K562 (cell line): ENCODE measurements at regions of chr20 and their contacts with region 1.

Region 1: DNA sequence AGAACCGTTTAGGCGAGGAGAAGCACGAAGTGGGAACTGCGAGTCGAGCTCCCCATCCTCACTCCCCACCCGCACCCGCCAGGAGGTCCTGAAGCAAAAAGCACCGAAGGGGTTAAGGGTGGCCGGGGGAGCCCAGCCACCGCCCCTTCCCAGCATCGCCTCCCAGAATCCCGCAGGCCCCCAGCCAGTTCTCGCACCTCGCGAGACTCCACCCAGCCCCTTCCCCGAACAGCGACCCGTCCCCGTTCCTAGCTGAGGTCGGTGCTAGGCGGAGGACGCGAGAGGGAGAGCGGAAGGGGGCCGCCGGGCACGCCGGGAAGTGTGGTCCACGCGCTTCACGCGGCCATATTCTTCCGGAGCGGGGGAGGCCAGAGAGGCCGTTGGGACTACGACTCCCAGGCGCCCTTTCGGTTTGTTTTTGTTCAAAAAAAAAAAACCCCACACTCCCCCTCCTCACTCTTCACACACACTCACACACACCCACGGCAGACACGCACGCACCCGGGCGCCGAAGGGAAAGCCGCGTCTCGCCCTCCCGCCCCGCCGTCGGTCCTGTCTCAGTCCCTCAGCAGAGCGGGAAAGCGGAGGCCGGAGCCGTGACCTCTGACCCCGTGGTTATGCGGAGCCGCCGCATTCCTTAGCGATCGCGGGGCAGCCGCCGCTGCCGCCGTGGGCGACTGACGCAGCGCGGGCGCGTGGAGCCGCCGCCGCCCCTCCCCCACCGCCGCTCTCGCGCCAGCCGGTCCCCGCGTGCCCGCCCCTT is at the start of gene ASXL1:
- DNase-seq: peak; percentile 92 to 98 (median 93)
- ATAC-seq: peak; percentile 94
- H3K4me3 ChIP-seq: peak within 1 kb of the TSS; percentile 96
- H3K27ac ChIP-seq: peak within 1 kb of the TSS; percentile 99
- H3K4me1 ChIP-seq: peaks cover 17 to 33% of the 10 kb centered on the region in 2 experiments
- H3K27me3 ChIP-seq: no peaks in the 10 kb centered on the region
- CTCF ChIP-seq: peak in 1 of 3 experiments; percentile 46; a peak in 2 of 6 replicates
- EP300 ChIP-seq: no peak
- POLR2A ChIP-seq: peak; percentile 82
- RAD21 ChIP-seq: no peak
- polyA plus RNA-seq, gene ASXL1: 6.5 to 8.4 TPM

Region 2: GRCh38 chr20:32207626-32208498 is 150.2 kb before region 1 on chr20 and contains the starts of genes PLAGL2 and POFUT1:
- CTCF ChIA-PET with region 1: no interaction called
- POLR2A ChIA-PET with region 1: no interaction called
- in situ Hi-C with region 1: no loop called
- intact Hi-C with region 1: loop called (anchors 10 kb)
- DNase-seq: peak; percentile 92 to 98 (median 98)
- ATAC-seq: peak; percentile 94
- H3K4me3 ChIP-seq: peak within 1 kb of the TSS; percentile 99
- H3K27ac ChIP-seq: peak within 1 kb of the TSS; percentile 91
- H3K4me1 ChIP-seq: peaks cover 18 to 39% of the 10 kb centered on the region in 2 experiments
- H3K27me3 ChIP-seq: no peaks in the 10 kb centered on the region
- CTCF ChIP-seq: peak; percentile 24 to 27 (median 26); a peak in 4 of 6 replicates
- EP300 ChIP-seq: no peak
- POLR2A ChIP-seq: peak; percentile 91
- RAD21 ChIP-seq: peak; percentile 23 to 29; a peak in 3 of 4 replicates
- polyA plus RNA-seq, gene PLAGL2: 3.1 to 5.3 TPM
- polyA plus RNA-seq, gene POFUT1: 3.5 to 6.0 TPM

Region 3: GRCh38 chr20:32344835-32345506 is 13.1 kb before region 1 on chr20:
- CTCF ChIA-PET with region 1: no interaction called
- POLR2A ChIA-PET with region 1: interaction called, 10 read pairs
- in situ Hi-C with region 1: no loop called
- intact Hi-C with region 1: no loop called
- DNase-seq: no peak
- ATAC-seq: peak; percentile 77
- H3K4me3 ChIP-seq: no peak overlapping the region
- H3K27ac ChIP-seq: no peak overlapping the region
- H3K4me1 ChIP-seq: peaks cover 2 to 3% of the 10 kb centered on the region in 2 experiments; a peak in 1 of 5 replicates
- H3K27me3 ChIP-seq: no peaks in the 10 kb centered on the region
- CTCF ChIP-seq: no peak
- EP300 ChIP-seq: no peak
- POLR2A ChIP-seq: no peak
- RAD21 ChIP-seq: no peak

Region 4: GRCh38 chr20:32368925-32369324 is 10.9 kb after region 1 on chr20:
- CTCF ChIA-PET with region 1: interaction called, 3 read pairs
- POLR2A ChIA-PET with region 1: interaction called, 16 read pairs
- in situ Hi-C with region 1: no loop called
- intact Hi-C with region 1: no loop called
- DNase-seq: no peak
- ATAC-seq: no peak
- H3K4me3 ChIP-seq: no peak overlapping the region
- H3K27ac ChIP-seq: no peak overlapping the region
- H3K4me1 ChIP-seq: peaks cover 0 to 5% of the 10 kb centered on the region in 2 experiments; a peak in 3 of 5 replicates
- H3K27me3 ChIP-seq: no peaks in the 10 kb centered on the region
- CTCF ChIP-seq: no peak
- EP300 ChIP-seq: no peak
- POLR2A ChIP-seq: no peak
- RAD21 ChIP-seq: no peak

Region 5: GRCh38 chr20:32396646-32397160 is 38.7 kb after region 1 on chr20:
- CTCF ChIA-PET with region 1: no interaction called
- POLR2A ChIA-PET with region 1: interaction called, 5 read pairs
- in situ Hi-C with region 1: no loop called
- intact Hi-C with region 1: loop called (anchors 2 kb)
- DNase-seq: no peak
- ATAC-seq: no peak
- H3K4me3 ChIP-seq: no peak overlapping the region
- H3K27ac ChIP-seq: no peak overlapping the region; the same call in 2 of the 3 replicates
- H3K4me1 ChIP-seq: peaks cover 7 to 8% of the 10 kb centered on the region in 2 experiments; a peak in 4 of 5 replicates
- H3K27me3 ChIP-seq: no peaks in the 10 kb centered on the region
- CTCF ChIP-seq: no peak
- EP300 ChIP-seq: no peak
- POLR2A ChIP-seq: no peak
- RAD21 ChIP-seq: no peak

Region 6: DNA sequence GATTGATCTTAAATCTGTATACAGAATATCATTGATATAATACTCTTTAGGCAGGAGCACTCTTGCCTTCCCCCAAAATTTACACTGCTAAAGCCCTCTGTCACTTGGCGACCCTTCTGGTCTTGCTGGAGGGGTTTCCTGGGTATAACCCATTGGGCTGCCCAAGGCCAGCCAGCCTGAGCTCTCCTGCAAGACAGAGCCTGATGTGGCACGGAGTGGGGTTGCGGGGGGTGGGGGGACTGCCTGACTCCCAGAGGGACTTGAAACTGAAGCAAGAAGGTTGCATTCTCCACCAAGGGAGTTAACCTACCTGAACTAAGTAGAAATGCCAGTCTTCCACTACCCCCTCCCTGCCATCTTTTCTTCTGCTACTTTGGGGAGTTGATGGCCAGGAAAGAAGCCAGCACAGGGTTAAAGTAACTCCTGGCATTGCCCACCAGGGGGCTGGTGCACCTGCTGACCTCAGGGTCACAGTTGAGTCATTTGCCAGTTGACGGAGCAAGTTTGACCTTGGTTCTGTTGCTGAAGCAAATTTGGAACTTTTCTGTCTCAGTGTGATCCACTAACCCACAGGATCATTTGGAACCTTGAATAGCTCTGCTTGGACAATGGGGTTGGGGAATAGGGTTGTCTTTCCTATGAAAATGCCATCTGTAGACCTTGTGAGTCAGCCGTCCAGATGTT is 79.5 kb after region 1 on chr20:
- CTCF ChIA-PET with region 1: no interaction called
- POLR2A ChIA-PET with region 1: no interaction called
- in situ Hi-C with region 1: no loop called
- intact Hi-C with region 1: loop called (anchors 5 kb)
- DNase-seq: peak in 1 of 4 experiments; percentile 25
- ATAC-seq: no peak; the same call in 2 of the 3 replicates
- H3K4me3 ChIP-seq: no peak overlapping the region
- H3K27ac ChIP-seq: no peak overlapping the region
- H3K4me1 ChIP-seq: peaks cover 0 to 3% of the 10 kb centered on the region in 2 experiments; a peak in 1 of 5 replicates
- H3K27me3 ChIP-seq: no peaks in the 10 kb centered on the region
- CTCF ChIP-seq: peak; percentile 40 to 57 (median 55)
- EP300 ChIP-seq: no peak
- POLR2A ChIP-seq: no peak
- RAD21 ChIP-seq: peak in 1 of 2 experiments; percentile 32; a peak in 2 of 4 replicates

Region 7: DNA sequence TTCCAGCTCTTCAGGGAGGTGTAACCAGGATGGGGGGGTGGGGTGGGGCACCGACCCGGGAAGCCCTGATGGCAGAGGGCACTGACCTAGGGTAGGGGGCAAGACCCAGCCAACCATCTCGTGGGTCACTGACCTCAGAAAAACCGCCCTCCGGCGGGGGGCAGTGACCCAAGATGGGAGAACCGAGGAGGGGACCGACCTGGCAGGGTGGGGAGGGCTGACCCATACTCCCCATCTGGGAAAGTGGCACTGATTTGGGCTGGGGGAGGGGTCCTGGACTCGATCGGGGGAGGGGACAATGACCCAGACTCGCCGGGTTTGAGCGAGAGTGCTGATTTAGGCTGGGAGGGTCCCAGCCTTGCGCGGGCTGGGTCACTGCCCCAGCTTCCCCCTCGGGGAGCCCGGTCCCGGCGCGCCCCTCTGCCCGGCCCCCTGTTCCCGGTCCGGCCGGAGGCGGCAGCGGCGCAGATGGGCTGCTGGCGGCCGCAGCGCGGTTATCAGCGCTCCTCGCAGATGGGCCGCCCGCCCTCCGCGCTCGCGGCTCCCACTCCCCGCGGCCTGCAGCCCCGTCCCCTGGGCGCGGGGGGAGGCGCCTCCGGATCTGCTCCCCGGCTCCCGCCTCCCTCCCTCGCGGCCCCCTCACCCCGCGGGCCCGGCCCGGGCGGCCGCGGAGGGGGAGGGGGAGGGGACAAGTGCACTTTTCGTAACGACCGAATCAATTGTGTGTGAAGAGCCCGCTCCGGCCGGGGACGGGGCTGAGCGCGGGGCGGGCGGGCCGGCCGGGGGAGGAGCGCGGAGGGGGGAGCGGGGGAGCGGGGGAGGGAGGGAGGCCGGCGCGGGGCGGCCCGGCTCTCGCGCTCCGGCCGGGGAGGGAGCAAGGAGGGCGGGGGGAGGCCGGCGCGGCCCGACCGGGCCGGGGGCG is 224.9 kb after region 1 on chr20:
- CTCF ChIA-PET with region 1: no interaction called
- POLR2A ChIA-PET with region 1: interaction called, 3 read pairs
- in situ Hi-C with region 1: no loop called
- intact Hi-C with region 1: loop called (anchors 5 kb)
- DNase-seq: peak; percentile 70 to 83 (median 80)
- ATAC-seq: peak; percentile 31
- H3K4me3 ChIP-seq: peak overlapping the region; percentile 87
- H3K27ac ChIP-seq: peak overlapping the region; percentile 83
- H3K4me1 ChIP-seq: peaks cover 55 to 68% of the 10 kb centered on the region in 2 experiments
- H3K27me3 ChIP-seq: no peaks in the 10 kb centered on the region
- CTCF ChIP-seq: no peak
- EP300 ChIP-seq: no peak
- POLR2A ChIP-seq: no peak
- RAD21 ChIP-seq: peak in 1 of 2 experiments; percentile 17; a peak in 1 of 4 replicates